Left colon (tissue), 2 donors: ENCODE measurements at regions of chr5 and their contacts with region 1.

Region 1: GRCh38 chr5:4879693-4880303 is 260.3 kb upstream of the ADAMTS16 start:
- DNase-seq: peak; percentile 50 to 54
- ATAC-seq: peak; percentile 64

Region 2: GRCh38 chr5:4941957-4942830 is 62.4 kb after region 1 on chr5:
- intact Hi-C with region 1: loop called in 1 of 2 experiments (anchors 5 kb)
- DNase-seq: no peak
- ATAC-seq: no peak

Region 3: DNA sequence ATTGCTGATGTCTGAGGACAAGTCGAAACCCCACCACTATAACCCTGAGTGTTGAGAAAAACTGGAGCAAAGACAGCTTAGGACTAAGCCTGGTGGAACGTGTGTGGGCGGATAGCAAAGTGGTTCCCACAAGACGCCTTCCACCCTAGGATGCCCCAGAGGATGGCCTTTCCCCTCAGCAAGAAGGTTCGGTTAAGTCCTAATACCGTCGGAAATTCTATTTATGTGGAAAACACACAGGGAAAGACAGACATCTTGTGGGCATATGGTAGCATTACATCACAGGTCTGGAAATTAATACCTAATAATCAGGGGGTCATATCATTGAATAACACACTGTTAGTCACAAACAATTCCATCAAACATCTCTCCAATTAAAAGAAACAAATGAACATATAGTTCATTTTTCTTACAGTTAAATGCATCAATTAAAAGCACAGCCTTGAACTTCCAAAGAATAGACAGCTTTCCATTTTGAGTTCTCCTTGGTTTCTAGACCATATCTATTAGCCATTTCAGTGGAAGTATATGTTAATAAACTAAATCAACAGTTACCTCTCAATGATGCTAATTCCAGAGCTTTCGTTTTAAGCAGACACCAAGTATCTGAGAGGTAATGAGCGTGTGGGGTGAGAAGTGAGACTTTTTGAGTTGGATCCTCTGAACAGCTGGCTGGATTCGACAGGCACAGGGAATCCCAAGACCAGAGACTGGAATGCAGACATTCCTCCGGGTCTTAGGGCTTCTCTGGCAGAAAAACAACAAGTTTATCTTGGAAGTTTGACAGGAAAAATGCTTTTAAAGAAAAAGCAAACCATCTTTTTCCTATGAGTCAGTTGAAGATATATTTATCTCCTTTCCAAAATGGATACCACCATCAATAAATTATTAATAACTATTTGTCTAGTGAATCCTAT is 539.8 kb after region 1 on chr5:
- intact Hi-C with region 1: loop called in 1 of 2 experiments (anchors 5 kb)
- DNase-seq: no peak
- ATAC-seq: no peak